Left colon (tissue), 2 donors: ENCODE measurements at regions of chr7 and their contacts with region 1.

Region 1: GRCh38 chr7:31134246-31135188 is 82.4 kb downstream of the ADCYAP1R1 start:
- DNase-seq: peak; percentile 32 to 57
- ATAC-seq: peak; percentile 88

Region 2: GRCh38 chr7:31633894-31634494 is 499.5 kb after region 1 on chr7:
- intact Hi-C with region 1: loop called in 1 of 2 experiments (anchors 10 kb)
- DNase-seq: peak; percentile 44 to 48
- ATAC-seq: peak; percentile 99

Region 3: DNA sequence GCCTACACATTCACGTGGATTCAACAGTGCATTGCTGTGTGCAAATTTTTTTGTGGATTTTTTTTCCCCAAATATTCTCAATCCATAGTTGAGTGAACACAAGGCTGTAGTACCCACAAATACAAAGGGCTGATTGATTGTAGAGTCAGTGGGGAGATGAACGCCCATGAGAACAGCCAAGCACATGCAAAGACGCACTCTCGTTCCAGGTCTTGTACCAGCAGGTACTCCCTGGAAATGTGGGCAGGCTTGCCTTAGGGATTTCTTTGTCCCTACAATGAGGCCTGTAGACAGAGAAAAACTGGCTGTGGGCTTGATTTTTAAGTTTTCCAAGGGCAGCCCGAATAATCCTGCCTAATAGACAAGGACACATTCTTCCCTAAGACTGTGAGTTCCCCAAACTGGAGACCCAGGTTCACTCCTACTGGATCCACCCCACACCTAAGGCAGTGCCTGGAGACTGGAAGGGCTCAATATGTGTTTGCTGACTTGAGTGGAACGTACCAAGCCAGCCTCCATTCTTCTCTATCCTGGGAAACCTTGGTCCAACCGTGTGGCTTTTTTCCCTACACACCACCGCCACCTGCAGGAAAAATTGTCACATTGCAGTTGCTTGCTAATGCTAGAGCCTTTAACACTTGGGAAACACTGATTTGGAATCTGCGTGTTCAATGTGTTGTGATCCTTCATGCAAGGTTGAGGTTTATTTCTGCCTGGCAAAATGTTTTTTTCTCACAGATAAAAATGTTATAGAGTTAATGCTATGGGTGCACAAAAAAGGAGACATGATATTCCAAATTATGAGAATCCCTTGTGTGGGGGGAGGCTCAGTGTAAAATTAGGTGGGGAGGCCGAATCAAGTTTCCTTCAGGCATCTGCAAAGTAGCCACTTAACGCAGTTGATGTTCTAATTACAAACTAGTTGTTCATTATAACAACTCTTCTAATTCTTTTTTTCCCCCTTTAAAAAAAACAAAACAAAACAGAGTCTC is 601.8 kb after region 1 on chr7:
- intact Hi-C with region 1: loop called in 1 of 2 experiments (anchors 5 kb)
- DNase-seq: peak in 1 of 2 donors; percentile 33
- ATAC-seq: peak; percentile 74